ENCODE measurements at regions of chr15 and their contacts with region 1.

Region 1: GRCh38 chr15:70091726-70092463 is 5.8 kb downstream of the TLE3 start:
- DNase-seq: no peak
- H3K4me3 ChIP-seq: peak overlapping the region in 2 of 4 donors; percentile 5 to 12
- H3K27ac ChIP-seq: peak overlapping the region in 3 of 4 donors; percentile 99
- H3K4me1 ChIP-seq: peaks cover 2 to 90% (median 85%) of the 10 kb centered on the region in 4 donors
- H3K27me3 ChIP-seq: no peaks in the 10 kb centered on the region
- CTCF ChIP-seq: no peak
- EP300 ChIP-seq: no peak
- POLR2A ChIP-seq: no peak

Region 2: DNA sequence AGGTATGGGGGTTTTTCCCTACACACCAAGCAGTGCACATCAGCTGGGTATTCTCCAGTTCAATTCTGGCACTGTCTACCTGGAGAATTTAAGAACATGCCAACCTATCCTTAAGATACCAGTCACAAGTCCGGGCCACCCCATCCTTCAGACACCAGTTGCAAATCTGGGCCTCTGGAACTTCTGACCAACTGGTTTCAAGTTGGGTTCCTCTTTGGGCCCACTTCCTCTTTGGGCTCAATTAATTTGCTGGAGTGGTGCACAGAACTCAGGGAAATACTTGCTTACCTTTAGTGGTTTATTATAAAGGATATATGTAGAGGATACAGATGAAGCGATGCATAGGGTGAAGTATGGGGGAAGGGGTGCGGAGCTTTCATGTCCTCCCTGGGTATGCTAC is 906.2 kb before region 1 on chr15:
- intact Hi-C with region 1: no loop called
- DNase-seq: no peak
- H3K4me3 ChIP-seq: no peak overlapping the region
- H3K27ac ChIP-seq: no peak overlapping the region
- H3K4me1 ChIP-seq: no peaks in the 10 kb centered on the region
- H3K27me3 ChIP-seq: no peaks in the 10 kb centered on the region
- CTCF ChIP-seq: no peak
- EP300 ChIP-seq: no peak
- POLR2A ChIP-seq: no peak

Region 3: GRCh38 chr15:70068783-70069565 is 22.9 kb before region 1 on chr15:
- intact Hi-C with region 1: loop called (anchors 2 kb)
- DNase-seq: peak; percentile 80
- H3K4me3 ChIP-seq: no peak overlapping the region
- H3K27ac ChIP-seq: peak overlapping the region in 2 of 4 donors; percentile 43 to 49
- H3K4me1 ChIP-seq: peaks cover 0 to 55% (median 45%) of the 10 kb centered on the region in 4 donors
- H3K27me3 ChIP-seq: no peaks in the 10 kb centered on the region
- CTCF ChIP-seq: no peak
- EP300 ChIP-seq: peak in 2 of 4 donors; percentile 43 to 57
- POLR2A ChIP-seq: no peak

Region 4: DNA sequence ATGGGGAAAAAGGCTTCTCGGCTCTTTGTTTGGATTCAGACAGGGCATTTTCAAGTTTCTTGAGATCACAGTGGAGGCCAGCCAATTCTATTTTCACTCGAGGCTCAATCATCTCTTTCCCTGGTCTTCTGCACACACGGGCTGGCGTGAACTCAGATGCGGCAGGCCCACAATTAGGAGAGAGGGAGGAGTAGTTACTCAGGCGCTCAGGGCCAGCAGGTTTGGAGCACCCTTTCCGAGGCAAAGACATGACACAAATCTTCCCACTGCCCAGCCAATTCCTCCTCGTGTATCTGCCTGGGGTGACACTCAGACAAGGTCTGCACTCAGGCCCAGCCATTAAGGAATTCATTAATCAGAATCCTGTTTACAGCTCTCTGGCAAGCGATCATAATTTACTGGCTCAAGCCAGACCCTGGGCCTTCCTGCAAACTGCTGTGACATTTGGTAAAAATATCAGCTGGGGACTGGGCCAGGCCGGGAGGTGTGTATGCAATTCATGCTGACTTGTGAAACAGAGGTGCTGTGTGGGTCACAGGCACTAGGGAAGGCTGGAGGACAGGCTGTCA is 73.9 kb after region 1 on chr15:
- intact Hi-C with region 1: no loop called
- DNase-seq: peak; percentile 90
- H3K4me3 ChIP-seq: no peak overlapping the region
- H3K27ac ChIP-seq: peak overlapping the region; percentile 69 to 82 (median 72)
- H3K4me1 ChIP-seq: peaks cover 0 to 39% (median 35%) of the 10 kb centered on the region in 4 donors
- H3K27me3 ChIP-seq: no peaks in the 10 kb centered on the region
- CTCF ChIP-seq: no peak
- EP300 ChIP-seq: no peak
- POLR2A ChIP-seq: no peak

Measured in sigmoid colon (tissue), 7 donors.